ENCODE measurements at regions of chr9 and their contacts with region 1.

Region 1: DNA sequence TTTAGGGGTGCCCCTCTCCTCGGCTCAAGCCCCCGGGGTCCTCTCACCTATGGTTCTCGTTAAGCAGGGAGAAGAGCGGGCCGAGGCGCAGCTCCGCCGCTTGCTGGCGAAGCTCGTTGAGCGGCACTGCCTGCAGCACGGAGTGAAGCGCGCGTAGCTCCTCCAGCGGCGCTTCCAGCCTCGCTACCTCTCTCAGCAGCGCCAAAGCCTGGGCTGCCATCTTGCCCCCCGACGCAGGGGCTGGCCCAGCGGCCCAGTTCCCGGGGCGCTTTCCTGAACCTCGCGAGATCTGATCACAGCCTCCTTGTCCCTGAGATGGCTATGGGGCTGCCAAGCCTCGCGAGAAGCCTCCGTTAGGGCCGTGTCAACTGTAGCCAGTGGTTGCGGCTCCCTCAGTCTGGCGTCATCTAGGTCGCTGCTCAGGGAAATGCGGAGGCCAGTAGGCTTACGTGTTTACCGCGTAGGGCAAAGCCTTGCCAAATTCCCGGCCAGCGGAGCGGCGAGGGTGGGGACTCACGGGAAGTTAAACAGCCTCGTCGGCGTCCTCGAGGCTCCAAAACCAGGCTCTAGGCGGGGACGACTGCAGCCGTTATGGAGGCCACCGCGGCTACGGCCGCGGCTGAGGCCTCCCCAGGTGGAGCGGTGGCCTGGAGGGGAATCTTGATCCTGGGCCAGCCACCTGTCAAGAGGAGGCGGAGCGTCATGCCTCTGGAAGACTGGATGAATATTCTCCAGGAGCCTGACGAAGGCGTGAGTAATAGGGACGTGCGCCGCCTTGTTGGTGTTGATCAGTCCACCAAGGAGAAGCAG is at the start of gene PSMD5:
- DNase-seq: peak; percentile 100
- ATAC-seq: peak; percentile 95
- H3K4me3 ChIP-seq: peak within 1 kb of the TSS; percentile 54
- H3K27ac ChIP-seq: peak within 1 kb of the TSS; percentile 95
- H3K4me1 ChIP-seq: peaks cover 37 to 58% of the 10 kb centered on the region in 2 experiments
- H3K27me3 ChIP-seq: no peaks in the 10 kb centered on the region
- CTCF ChIP-seq: peak in 1 of 3 experiments; percentile 59; a peak in 2 of 6 replicates
- EP300 ChIP-seq: peak; percentile 59; the same call in 1 of the 2 replicates
- POLR2A ChIP-seq: no peak
- RAD21 ChIP-seq: no peak
- polyA plus RNA-seq, gene PSMD5: 46.4 to 60.9 TPM

Region 2: DNA sequence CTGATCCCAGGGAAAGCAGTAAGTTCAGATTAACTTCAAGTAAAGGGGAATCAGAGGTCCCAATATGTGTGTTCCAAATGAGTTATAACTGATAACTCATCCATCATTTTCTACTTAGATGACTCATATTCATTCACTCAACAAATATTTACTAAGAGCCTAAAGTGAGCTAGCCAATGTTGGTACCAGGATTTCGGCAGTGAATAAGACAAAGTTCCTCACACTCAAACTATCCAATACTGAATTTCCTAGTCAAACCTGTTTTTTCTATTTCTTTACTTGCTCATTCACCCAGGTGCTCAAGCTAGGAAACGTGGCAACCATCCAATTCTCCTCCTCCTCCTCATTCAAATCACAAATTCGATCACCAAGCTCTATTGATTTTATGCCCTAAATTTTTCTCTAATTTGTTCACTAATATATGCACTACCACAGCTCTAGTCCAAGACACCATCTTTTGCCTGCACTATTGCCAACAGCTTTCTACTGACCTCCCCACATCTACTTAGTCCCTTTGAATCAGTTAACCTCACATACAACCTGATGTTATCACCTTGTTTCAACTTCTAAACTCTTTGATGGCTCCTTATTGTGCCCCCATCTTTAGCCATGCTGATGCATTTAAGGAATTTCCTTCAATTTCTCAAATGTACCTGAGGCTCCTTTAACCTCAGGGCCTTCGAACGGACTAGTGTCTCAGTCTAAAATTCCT is 75.3 kb before region 1 on chr9:
- CTCF ChIA-PET with region 1: no interaction called
- POLR2A ChIA-PET with region 1: interaction called, 4 read pairs
- in situ Hi-C with region 1: no loop called
- intact Hi-C with region 1: loop called (anchors 5 kb)
- DNase-seq: no peak
- ATAC-seq: no peak
- H3K4me3 ChIP-seq: no peak overlapping the region
- H3K27ac ChIP-seq: peak overlapping the region; percentile 59
- H3K4me1 ChIP-seq: peaks cover 12 to 34% of the 10 kb centered on the region in 2 experiments
- H3K27me3 ChIP-seq: no peaks in the 10 kb centered on the region
- CTCF ChIP-seq: no peak
- EP300 ChIP-seq: peak; percentile 27; the same call in 1 of the 2 replicates
- POLR2A ChIP-seq: no peak
- RAD21 ChIP-seq: no peak

Region 3: DNA sequence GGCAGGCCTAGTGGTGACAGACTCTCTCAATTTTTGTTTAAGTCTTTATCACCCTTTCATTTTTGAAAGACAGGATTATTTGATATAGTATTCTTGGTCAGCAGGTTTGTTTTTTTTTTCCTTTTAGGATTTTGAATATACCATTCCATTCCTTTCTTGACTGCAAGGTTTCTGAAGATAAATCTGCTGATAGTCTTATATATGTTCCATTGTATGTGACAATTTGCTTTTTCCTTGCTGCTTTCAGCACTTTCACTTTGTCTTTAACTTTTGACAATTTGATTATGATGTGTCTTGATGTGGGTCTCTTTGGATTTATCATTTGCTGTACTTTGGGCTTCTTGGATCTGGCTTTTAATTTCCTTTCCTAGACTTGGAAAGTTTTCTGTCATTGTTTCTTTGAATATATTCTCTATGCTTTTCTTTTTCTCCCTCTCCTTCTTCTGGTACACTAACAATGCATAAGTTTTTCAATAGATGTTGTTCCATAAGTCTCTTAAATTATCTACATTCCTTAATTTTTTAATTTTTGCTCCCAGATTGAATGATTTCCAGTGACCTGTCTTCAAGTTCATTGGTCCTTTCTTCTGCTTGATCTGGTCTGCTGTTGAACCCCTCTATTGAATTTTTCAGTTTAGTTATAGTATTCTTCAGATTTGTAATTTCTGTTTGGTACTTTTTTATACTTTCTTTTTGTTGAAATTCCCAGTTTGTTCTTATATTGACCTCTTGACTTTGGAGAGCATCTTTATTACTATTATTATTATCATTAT is 35.1 kb before region 1 on chr9:
- CTCF ChIA-PET with region 1: no interaction called
- POLR2A ChIA-PET with region 1: no interaction called
- in situ Hi-C with region 1: no loop called
- intact Hi-C with region 1: loop called (anchors 5 kb)
- DNase-seq: no peak
- ATAC-seq: peak; percentile 58; the same call in 2 of the 3 replicates
- H3K4me3 ChIP-seq: no peak overlapping the region
- H3K27ac ChIP-seq: no peak overlapping the region
- H3K4me1 ChIP-seq: no peaks in the 10 kb centered on the region
- H3K27me3 ChIP-seq: no peaks in the 10 kb centered on the region
- CTCF ChIP-seq: no peak
- EP300 ChIP-seq: no peak
- POLR2A ChIP-seq: no peak
- RAD21 ChIP-seq: no peak

Region 4: DNA sequence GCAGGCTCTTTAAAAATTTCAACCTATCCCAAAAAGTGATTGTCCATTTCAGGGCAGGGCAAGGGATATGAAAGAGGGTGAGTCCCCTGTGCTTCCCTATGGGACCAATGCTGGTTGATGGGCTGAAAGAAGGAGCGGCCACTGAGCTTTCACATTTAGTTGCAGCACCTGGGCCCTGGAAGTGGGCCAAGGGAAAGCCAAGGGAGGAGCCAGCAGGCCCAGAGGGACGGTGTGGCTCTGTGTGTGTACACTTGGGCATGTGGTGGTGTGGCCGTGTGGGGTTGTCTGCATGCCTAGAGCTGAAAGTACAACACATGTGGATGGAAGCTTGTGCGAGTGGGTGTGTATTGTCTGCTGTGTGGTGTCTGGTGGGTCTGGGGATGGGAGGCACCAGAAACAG is 13.8 kb after region 1 on chr9:
- CTCF ChIA-PET with region 1: no interaction called
- POLR2A ChIA-PET with region 1: interaction called, 78 read pairs
- in situ Hi-C with region 1: no loop called
- intact Hi-C with region 1: no loop called
- DNase-seq: no peak
- ATAC-seq: peak; percentile 10
- H3K4me3 ChIP-seq: no peak overlapping the region
- H3K27ac ChIP-seq: no peak overlapping the region
- H3K4me1 ChIP-seq: peaks cover 0 to 7% of the 10 kb centered on the region in 2 experiments; a peak in 1 of 5 replicates
- H3K27me3 ChIP-seq: no peaks in the 10 kb centered on the region
- CTCF ChIP-seq: no peak
- EP300 ChIP-seq: no peak
- POLR2A ChIP-seq: no peak
- RAD21 ChIP-seq: no peak

Region 5: GRCh38 chr9:120875954-120876841 is 33.3 kb after region 1 on chr9:
- CTCF ChIA-PET with region 1: no interaction called
- POLR2A ChIA-PET with region 1: interaction called, 22 read pairs
- in situ Hi-C with region 1: no loop called
- intact Hi-C with region 1: loop called (anchors 2 kb)
- DNase-seq: peak; percentile 100
- ATAC-seq: peak; percentile 84
- H3K4me3 ChIP-seq: peak overlapping the region; percentile 74
- H3K27ac ChIP-seq: peak overlapping the region; percentile 95
- H3K4me1 ChIP-seq: peaks cover 45 to 50% of the 10 kb centered on the region in 2 experiments
- H3K27me3 ChIP-seq: no peaks in the 10 kb centered on the region; a peak in 1 of 5 replicates
- CTCF ChIP-seq: peak in 1 of 3 experiments; percentile 30; a peak in 2 of 6 replicates
- EP300 ChIP-seq: peak; percentile 91
- POLR2A ChIP-seq: no peak
- RAD21 ChIP-seq: no peak

Region 6: GRCh38 chr9:120936011-120936763 is 93.3 kb after region 1 on chr9:
- CTCF ChIA-PET with region 1: no interaction called
- POLR2A ChIA-PET with region 1: no interaction called
- in situ Hi-C with region 1: no loop called
- intact Hi-C with region 1: loop called (anchors 2 kb)
- DNase-seq: peak; percentile 85 to 92 (median 90)
- ATAC-seq: peak; percentile 96
- H3K4me3 ChIP-seq: no peak overlapping the region
- H3K27ac ChIP-seq: no peak overlapping the region
- H3K4me1 ChIP-seq: peaks cover 13 to 40% of the 10 kb centered on the region in 2 experiments
- H3K27me3 ChIP-seq: peaks cover 2 to 7% of the 10 kb centered on the region in 2 experiments; a peak in 3 of 5 replicates
- CTCF ChIP-seq: peak; percentile 91 to 96 (median 92)
- EP300 ChIP-seq: no peak
- POLR2A ChIP-seq: no peak
- RAD21 ChIP-seq: peak; percentile 89 to 96